Sigmoid colon (tissue), 7 donors: ENCODE measurements at regions of chr11 and their contacts with region 1.

Region 1: GRCh38 chr11:67656278-67656922 is 5.9 kb upstream of the ACY3 start:
- DNase-seq: no peak
- H3K4me3 ChIP-seq: no peak overlapping the region
- H3K27ac ChIP-seq: no peak overlapping the region
- H3K4me1 ChIP-seq: no peaks in the 10 kb centered on the region
- H3K27me3 ChIP-seq: peaks cover 0 to 3% (median 0%) of the 10 kb centered on the region in 3 donors
- CTCF ChIP-seq: no peak
- EP300 ChIP-seq: no peak
- POLR2A ChIP-seq: no peak

Region 2: GRCh38 chr11:67572747-67573419 is 83.5 kb before region 1 on chr11:
- intact Hi-C with region 1: loop called (anchors 5 kb)
- DNase-seq: peak; percentile 82
- H3K4me3 ChIP-seq: no peak overlapping the region
- H3K27ac ChIP-seq: no peak overlapping the region
- H3K4me1 ChIP-seq: no peaks in the 10 kb centered on the region
- H3K27me3 ChIP-seq: peaks cover 0 to 6% (median 0%) of the 10 kb centered on the region in 3 donors
- CTCF ChIP-seq: peak; percentile 52 to 71 (median 55)
- EP300 ChIP-seq: no peak
- POLR2A ChIP-seq: no peak

Region 3: DNA sequence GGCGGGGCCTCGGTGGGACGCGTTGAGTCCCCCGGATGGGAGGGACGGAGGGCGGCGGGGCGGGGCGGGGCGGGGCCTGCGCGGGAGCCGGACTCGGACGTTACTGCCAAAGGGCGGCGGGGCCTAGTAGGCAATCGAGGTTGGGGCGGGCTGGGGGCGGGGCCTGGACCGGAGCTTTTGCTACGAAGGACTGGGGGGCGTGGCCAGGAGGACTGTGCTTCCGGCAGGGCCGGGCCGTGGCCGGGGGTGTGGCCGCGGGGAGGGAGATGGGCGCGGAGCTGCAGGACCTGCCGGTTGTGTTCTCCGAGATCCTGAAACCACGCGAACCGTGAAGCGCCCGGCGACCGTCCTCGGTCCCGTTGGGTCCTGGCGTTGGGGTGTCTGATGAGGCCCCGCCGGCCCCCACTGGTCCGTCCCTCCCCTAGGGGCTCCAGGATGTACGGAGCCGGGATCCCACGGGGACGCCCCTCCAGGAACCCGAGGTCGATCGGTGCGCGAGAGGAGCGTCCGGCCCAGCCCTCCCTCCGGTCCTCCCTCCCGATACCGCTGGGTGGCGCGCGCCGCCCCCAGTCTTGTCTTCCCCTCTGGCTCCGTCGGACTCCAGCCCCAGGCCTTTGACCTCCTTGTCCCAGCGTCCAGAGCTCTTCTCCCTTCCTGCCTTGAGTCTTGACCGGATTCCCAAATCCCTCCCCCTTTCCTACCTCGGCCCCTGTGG is 26.0 kb before region 1 on chr11:
- intact Hi-C with region 1: loop called (anchors 2 kb)
- DNase-seq: peak; percentile 99
- H3K4me3 ChIP-seq: peak overlapping the region; percentile 63 to 78 (median 68)
- H3K27ac ChIP-seq: peak overlapping the region; percentile 95 to 98 (median 97)
- H3K4me1 ChIP-seq: peaks cover 0 to 29% (median 19%) of the 10 kb centered on the region in 4 donors
- H3K27me3 ChIP-seq: peaks cover 0 to 5% (median 0%) of the 10 kb centered on the region in 3 donors
- CTCF ChIP-seq: peak; percentile 60 to 80 (median 68)
- EP300 ChIP-seq: no peak
- POLR2A ChIP-seq: peak in 1 of 2 donors; percentile 64

Region 4: DNA sequence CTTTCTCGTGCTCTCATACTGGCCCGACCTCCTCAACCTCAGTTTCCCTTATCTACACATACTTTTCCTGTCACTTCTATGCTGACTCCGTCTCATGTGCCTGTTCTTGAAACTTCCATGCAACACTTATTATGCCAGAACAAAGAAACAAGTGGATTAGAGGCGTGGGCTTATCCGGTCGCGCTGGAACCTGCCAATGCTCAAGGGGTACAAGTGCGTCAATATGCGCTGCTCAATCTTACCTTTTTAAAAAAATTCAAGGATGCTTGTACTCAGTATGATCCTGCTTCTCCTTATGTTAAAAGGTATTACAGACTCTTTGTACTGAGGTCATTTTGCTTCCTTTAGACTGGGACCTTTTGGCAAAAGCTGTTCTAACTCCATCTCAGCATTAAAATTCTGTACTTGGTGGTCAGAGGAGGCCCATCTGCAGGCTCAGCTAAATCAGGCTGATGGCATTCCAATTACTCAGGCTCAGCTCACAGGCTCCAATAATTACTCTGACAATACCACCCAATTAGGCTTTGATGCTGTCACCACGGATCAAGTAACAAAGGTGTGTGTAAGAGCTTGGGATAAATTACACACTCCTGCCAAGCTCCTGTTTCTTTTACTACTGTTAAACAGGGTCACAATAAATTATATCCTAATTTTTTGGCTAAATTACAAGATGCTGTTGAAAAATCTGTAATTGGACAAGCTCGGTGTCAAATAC is 44.3 kb after region 1 on chr11:
- intact Hi-C with region 1: loop called (anchors 10 kb)
- DNase-seq: no peak
- H3K4me3 ChIP-seq: no peak overlapping the region
- H3K27ac ChIP-seq: no peak overlapping the region
- H3K4me1 ChIP-seq: peaks cover 0 to 6% (median 5%) of the 10 kb centered on the region in 4 donors
- H3K27me3 ChIP-seq: no peaks in the 10 kb centered on the region
- CTCF ChIP-seq: no peak
- EP300 ChIP-seq: no peak
- POLR2A ChIP-seq: no peak